ENCODE measurements at regions of chr19 and their contacts with region 1.

Region 1: DNA sequence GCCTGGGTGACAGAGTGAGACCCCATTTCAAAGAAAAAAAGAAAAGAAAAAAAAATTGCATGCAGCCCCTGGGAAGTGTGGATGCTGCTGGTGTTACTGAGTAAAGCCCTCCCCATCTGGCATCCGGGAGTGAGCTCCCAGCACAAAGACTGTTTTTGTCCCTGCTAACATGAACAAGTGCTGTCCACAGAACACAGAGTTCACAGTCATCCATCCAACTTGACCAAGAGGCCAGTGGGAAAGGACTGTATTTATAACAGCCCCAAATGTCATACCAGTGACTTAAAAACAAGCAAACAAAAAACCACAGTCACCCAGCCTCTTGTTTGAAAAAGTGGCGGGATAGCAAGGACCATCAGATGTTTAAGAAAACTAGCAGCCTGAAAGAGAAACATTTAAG is 10.8 kb downstream of the FBXO17 start:
- DNase-seq: no peak
- H3K4me3 ChIP-seq: no peak overlapping the region
- H3K27ac ChIP-seq: no peak overlapping the region
- H3K4me1 ChIP-seq: peaks cover 0 to 10% (median 2%) of the 10 kb centered on the region in 4 donors
- H3K27me3 ChIP-seq: no peaks in the 10 kb centered on the region
- CTCF ChIP-seq: no peak
- EP300 ChIP-seq: no peak
- POLR2A ChIP-seq: no peak

Region 2: GRCh38 chr19:38805180-38805579 is 159.6 kb before region 1 on chr19:
- intact Hi-C with region 1: no loop called
- DNase-seq: peak; percentile 34
- H3K4me3 ChIP-seq: no peak overlapping the region
- H3K27ac ChIP-seq: no peak overlapping the region
- H3K4me1 ChIP-seq: no peaks in the 10 kb centered on the region
- H3K27me3 ChIP-seq: no peaks in the 10 kb centered on the region
- CTCF ChIP-seq: no peak
- EP300 ChIP-seq: no peak
- POLR2A ChIP-seq: no peak

Region 3: GRCh38 chr19:38977445-38978325 is 12.9 kb after region 1 on chr19:
- intact Hi-C with region 1: loop called (anchors 2 kb)
- DNase-seq: no peak
- H3K4me3 ChIP-seq: no peak overlapping the region
- H3K27ac ChIP-seq: no peak overlapping the region
- H3K4me1 ChIP-seq: peaks cover 0 to 24% (median 21%) of the 10 kb centered on the region in 4 donors
- H3K27me3 ChIP-seq: no peaks in the 10 kb centered on the region
- CTCF ChIP-seq: no peak
- EP300 ChIP-seq: no peak
- POLR2A ChIP-seq: no peak

Region 4: DNA sequence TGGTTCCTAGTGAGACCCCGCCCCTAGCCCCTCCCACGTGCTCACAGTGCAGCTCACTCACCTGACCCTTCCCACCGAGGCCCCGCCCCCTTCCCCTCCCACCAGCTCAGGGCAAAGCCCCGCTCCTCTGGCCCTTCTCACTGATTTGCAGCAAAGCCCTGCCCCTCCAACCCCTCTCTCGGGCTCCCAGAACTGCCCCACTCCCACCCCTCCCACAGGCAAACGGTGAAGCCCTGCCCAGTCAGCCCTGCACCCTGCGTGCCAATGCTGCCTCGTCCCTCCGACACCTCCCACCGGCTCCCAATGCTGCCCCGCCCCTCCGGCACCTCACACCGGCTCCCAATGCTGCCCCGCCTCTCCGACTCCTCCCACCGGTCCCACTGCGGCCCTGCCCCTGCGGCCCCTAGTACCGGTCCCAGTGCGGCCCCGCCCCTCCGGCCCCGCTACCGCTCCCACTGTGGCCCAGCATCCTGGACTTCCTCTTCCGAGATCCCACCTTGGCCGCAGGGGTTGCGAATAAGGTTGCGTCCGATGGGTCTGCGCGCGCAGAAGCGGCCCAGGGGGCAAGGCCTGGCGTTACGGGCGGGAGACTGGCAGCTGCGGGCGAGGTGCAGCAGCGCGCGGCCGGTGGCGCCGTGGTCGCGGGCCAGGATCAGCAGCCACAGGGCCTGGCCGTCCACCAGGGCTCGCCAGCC is 66.8 kb after region 1 on chr19:
- intact Hi-C with region 1: loop called (anchors 5 kb)
- DNase-seq: peak; percentile 83
- H3K4me3 ChIP-seq: peak overlapping the region; percentile 59 to 81 (median 72)
- H3K27ac ChIP-seq: peak overlapping the region; percentile 50 to 76 (median 67)
- H3K4me1 ChIP-seq: peaks cover 0 to 22% (median 16%) of the 10 kb centered on the region in 4 donors
- H3K27me3 ChIP-seq: peaks cover 0 to 6% (median 0%) of the 10 kb centered on the region in 3 donors
- CTCF ChIP-seq: no peak
- EP300 ChIP-seq: no peak
- POLR2A ChIP-seq: no peak

Measured in sigmoid colon (tissue), 7 donors.